GM10248 (cell line): ENCODE measurements at regions of chr1 and their contacts with region 1.

Region 1: GRCh38 chr1:220926146-220926545 is 46.9 kb downstream of the HLX start:
- DNase-seq: no peak
- CTCF ChIP-seq: no peak

Region 2: GRCh38 chr1:220818421-220819173 is 107.5 kb before region 1 on chr1:
- CTCF ChIA-PET with region 1: no interaction called
- POLR2A ChIA-PET with region 1: no interaction called
- DNase-seq: no peak
- CTCF ChIP-seq: no peak

Region 3: GRCh38 chr1:220887520-220888416 is 38.4 kb before region 1 on chr1:
- CTCF ChIA-PET with region 1: no interaction called
- POLR2A ChIA-PET with region 1: no interaction called
- DNase-seq: no peak
- CTCF ChIP-seq: no peak

Region 4: GRCh38 chr1:220908757-220909156 is 17.4 kb before region 1 on chr1:
- CTCF ChIA-PET with region 1: interaction called, 13 read pairs
- POLR2A ChIA-PET with region 1: no interaction called
- DNase-seq: peak; percentile 15
- CTCF ChIP-seq: peak; percentile 20